IMR-90 (cell line): ENCODE measurements at regions of chr1 and their contacts with region 1.

Region 1: GRCh38 chr1:30830537-30830936 is 73.0 kb upstream of the LAPTM5 start:
- DNase-seq: no peak
- ATAC-seq: no peak
- H3K4me3 ChIP-seq: no peak overlapping the region
- H3K27ac ChIP-seq: no peak overlapping the region
- H3K4me1 ChIP-seq: no peaks in the 10 kb centered on the region
- H3K27me3 ChIP-seq: peaks cover 9% of the 10 kb centered on the region; the same call in 1 of the 2 replicates
- CTCF ChIP-seq: no peak
- POLR2A ChIP-seq: no peak
- RAD21 ChIP-seq: no peak

Region 2: DNA sequence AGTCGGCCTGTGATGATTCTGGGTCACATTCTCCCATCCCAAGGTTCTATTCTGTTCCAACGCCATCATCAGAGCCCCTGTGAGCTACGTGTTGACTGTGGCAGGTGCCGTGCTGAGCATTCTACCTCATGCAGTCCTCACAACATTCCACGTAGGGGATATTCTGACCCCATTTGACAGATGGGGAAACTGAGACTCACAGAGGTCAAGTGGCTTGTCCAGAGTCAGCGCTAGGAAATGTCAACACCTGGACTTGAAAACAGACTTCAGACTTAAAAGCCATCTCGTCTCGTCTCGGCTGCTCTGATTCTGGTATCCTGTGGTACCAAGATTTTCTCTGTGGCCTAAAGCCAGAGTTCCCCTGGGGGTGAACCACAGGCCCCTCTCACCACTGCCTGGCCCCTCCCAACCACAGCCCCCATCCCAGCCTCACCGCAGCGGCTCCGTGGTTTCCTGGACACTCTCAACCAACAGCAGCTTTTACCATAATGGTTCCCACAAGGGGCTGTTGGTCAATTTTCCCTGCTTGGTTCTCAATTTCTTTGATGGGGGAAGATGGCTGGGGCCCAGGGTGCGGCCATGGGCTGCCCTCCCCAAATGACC is 38.4 kb after region 1 on chr1:
- CTCF ChIA-PET with region 1: no interaction called
- POLR2A ChIA-PET with region 1: interaction called, 13 read pairs
- dilution Hi-C with region 1: no loop called
- in situ Hi-C with region 1: no loop called
- intact Hi-C with region 1: no loop called
- DNase-seq: no peak
- ATAC-seq: no peak
- H3K4me3 ChIP-seq: no peak overlapping the region
- H3K27ac ChIP-seq: no peak overlapping the region
- H3K4me1 ChIP-seq: no peaks in the 10 kb centered on the region
- H3K27me3 ChIP-seq: no peaks in the 10 kb centered on the region
- CTCF ChIP-seq: no peak
- POLR2A ChIP-seq: no peak
- RAD21 ChIP-seq: no peak